Prostate gland (tissue), 2 donors: ENCODE measurements at regions of chr5 and their contacts with region 1.

Region 1: DNA sequence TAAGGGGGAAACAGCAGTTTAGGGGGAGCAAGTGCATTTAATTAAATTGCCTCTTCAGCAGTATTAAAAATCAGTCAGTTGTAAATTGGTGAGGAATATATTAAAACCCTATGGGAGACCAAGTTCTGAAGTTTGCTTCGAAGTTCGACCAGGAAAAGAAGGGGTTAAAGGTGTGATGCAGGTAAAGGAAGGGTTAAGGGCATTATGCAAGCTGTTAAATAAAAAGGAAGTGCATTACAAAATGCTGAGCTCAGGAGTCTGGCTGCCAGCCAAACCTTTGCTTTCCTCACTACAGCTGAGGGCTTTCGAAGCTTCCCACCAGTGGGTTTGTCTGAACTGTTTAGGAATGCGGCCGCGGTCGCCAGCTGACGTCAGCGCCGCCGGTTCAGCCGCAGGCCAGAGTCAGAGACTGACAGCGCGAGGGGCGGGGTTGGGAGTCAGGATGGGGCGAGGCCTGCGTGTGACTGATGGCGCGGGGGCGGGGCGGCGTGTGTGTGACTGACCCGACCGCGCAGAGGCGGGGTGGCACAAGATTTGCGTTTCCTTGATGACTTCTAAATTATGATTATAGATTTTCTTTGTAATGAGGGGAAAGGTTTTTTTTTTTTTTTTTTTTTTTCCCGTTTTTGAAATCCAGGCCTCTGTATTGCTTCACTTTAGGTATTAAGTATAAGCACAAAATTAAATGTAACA is 76.6 kb downstream of the ZSWIM6 start:
- DNase-seq: peak; percentile 98
- H3K4me3 ChIP-seq: peak overlapping the region; percentile 7 to 35
- H3K27ac ChIP-seq: peak overlapping the region in 1 of 2 donors; percentile 55
- H3K4me1 ChIP-seq: peaks cover 10% of the 10 kb centered on the region
- H3K27me3 ChIP-seq: no peaks in the 10 kb centered on the region
- CTCF ChIP-seq: peak in 2 of 4 experiments; percentile 2 to 9
- POLR2A ChIP-seq: no peak

Region 2: GRCh38 chr5:60699530-60700382 is 708.9 kb before region 1 on chr5 and contains the start of gene DEPDC1B:
- intact Hi-C with region 1: no loop called
- DNase-seq: peak; percentile 87
- H3K4me3 ChIP-seq: peak within 1 kb of the TSS; percentile 55 to 58
- H3K27ac ChIP-seq: peak within 1 kb of the TSS; percentile 78 to 80
- H3K4me1 ChIP-seq: no peaks in the 10 kb centered on the region
- H3K27me3 ChIP-seq: no peaks in the 10 kb centered on the region
- CTCF ChIP-seq: peak in 2 of 4 experiments; percentile 4 to 21
- POLR2A ChIP-seq: peak; percentile 73
- total RNA-seq, gene DEPDC1B: 0.32 to 1.8 TPM

Region 3: GRCh38 chr5:60822285-60822556 is 586.4 kb before region 1 on chr5:
- intact Hi-C with region 1: no loop called
- DNase-seq: no peak
- H3K4me3 ChIP-seq: no peak overlapping the region
- H3K27ac ChIP-seq: no peak overlapping the region
- H3K4me1 ChIP-seq: no peaks in the 10 kb centered on the region
- H3K27me3 ChIP-seq: no peaks in the 10 kb centered on the region
- CTCF ChIP-seq: no peak
- POLR2A ChIP-seq: no peak

Region 4: DNA sequence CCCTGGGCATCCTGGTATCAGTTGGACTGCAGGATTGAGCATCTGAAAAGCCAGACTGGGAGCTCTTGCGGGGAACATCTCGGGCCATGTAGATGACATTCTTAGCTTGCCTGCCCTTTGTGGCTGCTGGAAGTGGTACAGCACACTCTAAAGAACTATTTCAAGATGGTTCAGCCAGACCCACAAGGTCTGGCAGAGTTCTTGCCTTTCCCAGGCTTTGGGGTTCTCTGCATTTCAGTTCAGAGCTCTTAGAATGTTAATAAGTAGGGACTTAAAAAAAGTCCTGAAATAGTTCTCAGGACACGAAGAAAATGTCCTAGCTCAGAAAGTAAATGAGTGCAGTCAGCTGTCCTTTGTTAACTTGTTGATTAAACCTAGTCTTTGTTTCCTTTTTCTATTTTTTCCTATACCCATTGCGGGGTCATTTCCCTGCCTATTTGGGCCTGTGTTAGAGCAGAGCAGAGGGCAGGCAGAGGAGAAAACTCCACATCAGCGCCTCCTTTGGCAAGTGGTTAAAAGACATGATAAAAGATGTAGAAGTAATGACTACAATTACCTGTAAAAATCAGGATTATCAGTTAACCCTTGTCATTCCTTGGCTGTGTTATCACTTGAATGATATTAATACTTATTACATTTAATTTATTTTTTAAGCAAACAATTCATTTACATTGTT is 214.9 kb after region 1 on chr5:
- intact Hi-C with region 1: loop called (anchors 5 kb)
- DNase-seq: no peak
- H3K4me3 ChIP-seq: no peak overlapping the region
- H3K27ac ChIP-seq: peak overlapping the region; percentile 2 to 24
- H3K4me1 ChIP-seq: peaks cover 16% of the 10 kb centered on the region
- H3K27me3 ChIP-seq: no peaks in the 10 kb centered on the region
- CTCF ChIP-seq: no peak
- POLR2A ChIP-seq: no peak